HepG2 (cell line): ENCODE measurements at regions of chr10 and their contacts with region 1.

Region 1: GRCh38 chr10:93482145-93482834 is at the start of gene MYOF:
- DNase-seq: peak; percentile 59
- ATAC-seq: peak; percentile 82
- H3K4me3 ChIP-seq: peak within 1 kb of the TSS; percentile 50 to 65 (median 57)
- H3K27ac ChIP-seq: no peak within 1 kb of the TSS
- H3K4me1 ChIP-seq: peaks cover 8% of the 10 kb centered on the region; the same call in 1 of the 2 replicates
- H3K27me3 ChIP-seq: peaks cover 0 to 19% of the 10 kb centered on the region in 2 experiments; a peak in 3 of 5 replicates
- CTCF ChIP-seq: peak; percentile 74
- EP300 ChIP-seq: no peak
- POLR2A ChIP-seq: no peak
- RAD21 ChIP-seq: peak; percentile 69; the same call in 1 of the 2 replicates
- total RNA-seq, gene MYOF: 0.42 and 0.66 TPM in 2 replicates

Region 2: GRCh38 chr10:93376372-93377293 is 105.7 kb before region 1 on chr10:
- CTCF ChIA-PET with region 1: interaction called, 86 read pairs
- POLR2A ChIA-PET with region 1: no interaction called
- in situ Hi-C with region 1: loop called (anchors 5 kb)
- intact Hi-C with region 1: loop called (anchors 1 kb)
- DNase-seq: peak; percentile 69
- ATAC-seq: peak; percentile 87
- H3K4me3 ChIP-seq: no peak overlapping the region
- H3K27ac ChIP-seq: no peak overlapping the region
- H3K4me1 ChIP-seq: peaks cover 10% of the 10 kb centered on the region
- H3K27me3 ChIP-seq: no peaks in the 10 kb centered on the region
- CTCF ChIP-seq: peak; percentile 91
- EP300 ChIP-seq: no peak
- POLR2A ChIP-seq: no peak
- RAD21 ChIP-seq: peak; percentile 86

Region 3: DNA sequence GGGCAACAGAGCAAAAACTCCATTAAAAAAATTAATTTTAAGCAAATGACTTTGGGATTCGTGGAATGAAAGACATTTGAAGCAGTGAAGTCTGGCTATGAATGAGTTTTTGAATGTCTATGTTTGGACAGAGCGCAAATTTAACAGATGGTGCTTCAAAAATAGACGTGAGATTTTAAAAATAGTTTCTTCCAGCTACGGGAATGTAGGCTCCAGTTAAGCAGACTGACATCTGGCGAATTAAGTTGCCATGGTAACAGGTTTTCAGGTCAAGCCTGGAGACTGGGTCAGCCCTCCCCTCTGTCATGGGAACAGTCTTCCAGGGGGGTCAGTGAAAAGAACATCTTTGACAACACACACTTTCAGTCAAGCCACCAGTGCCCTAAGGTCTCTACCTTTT is 62.2 kb before region 1 on chr10:
- CTCF ChIA-PET with region 1: no interaction called
- POLR2A ChIA-PET with region 1: no interaction called
- in situ Hi-C with region 1: no loop called
- intact Hi-C with region 1: loop called (anchors 10 kb)
- DNase-seq: no peak
- ATAC-seq: no peak
- H3K4me3 ChIP-seq: no peak overlapping the region
- H3K27ac ChIP-seq: no peak overlapping the region
- H3K4me1 ChIP-seq: peaks cover 14% of the 10 kb centered on the region
- H3K27me3 ChIP-seq: no peaks in the 10 kb centered on the region
- CTCF ChIP-seq: no peak
- EP300 ChIP-seq: no peak
- POLR2A ChIP-seq: no peak
- RAD21 ChIP-seq: no peak

Region 4: DNA sequence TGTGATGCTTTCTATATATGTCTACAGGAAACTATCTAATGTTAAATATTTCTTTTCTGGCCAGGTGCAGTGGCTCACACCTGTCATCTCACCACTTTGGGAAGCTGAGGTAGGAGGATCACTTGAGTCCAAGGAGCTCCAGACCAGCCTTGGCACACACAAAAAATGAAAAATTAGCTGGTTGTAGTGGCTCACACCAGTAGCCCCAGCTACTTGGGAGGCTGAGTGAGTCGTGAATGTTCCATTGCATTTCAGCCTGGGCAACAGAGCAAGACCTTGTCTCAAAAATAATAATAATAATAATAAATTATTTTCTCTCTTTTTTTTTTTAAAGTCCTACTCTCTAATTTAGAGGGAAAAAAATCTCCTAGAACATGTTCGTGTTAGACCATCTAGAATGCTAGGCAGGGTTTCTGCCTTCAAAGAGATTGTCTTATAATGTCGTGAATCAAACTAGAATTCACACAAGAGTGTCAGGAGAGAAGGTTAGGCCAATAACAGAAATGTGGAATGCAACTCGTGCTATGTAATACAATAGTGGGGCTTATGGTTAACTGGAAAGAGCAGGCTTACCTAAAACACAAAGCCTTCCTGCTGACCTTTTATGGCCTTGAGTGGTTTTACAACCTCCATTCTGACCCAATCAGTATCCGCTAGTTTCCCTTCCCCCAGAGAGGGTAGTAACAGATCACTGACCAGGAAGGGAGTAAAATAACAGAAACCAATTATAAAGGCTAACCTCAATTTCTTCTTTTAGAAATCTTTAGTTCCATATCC is 46.5 kb before region 1 on chr10:
- CTCF ChIA-PET with region 1: no interaction called
- POLR2A ChIA-PET with region 1: no interaction called
- in situ Hi-C with region 1: no loop called
- intact Hi-C with region 1: no loop called
- DNase-seq: peak; percentile 35
- ATAC-seq: no peak
- H3K4me3 ChIP-seq: no peak overlapping the region
- H3K27ac ChIP-seq: no peak overlapping the region
- H3K4me1 ChIP-seq: peaks cover 25% of the 10 kb centered on the region
- H3K27me3 ChIP-seq: no peaks in the 10 kb centered on the region
- CTCF ChIP-seq: no peak
- EP300 ChIP-seq: no peak
- POLR2A ChIP-seq: no peak
- RAD21 ChIP-seq: no peak

Region 5: GRCh38 chr10:93515071-93516005 is 33.0 kb after region 1 on chr10:
- CTCF ChIA-PET with region 1: interaction called, 6 read pairs
- POLR2A ChIA-PET with region 1: no interaction called
- in situ Hi-C with region 1: no loop called
- intact Hi-C with region 1: loop called (anchors 1 kb)
- DNase-seq: no peak
- ATAC-seq: no peak
- H3K4me3 ChIP-seq: no peak overlapping the region
- H3K27ac ChIP-seq: no peak overlapping the region
- H3K4me1 ChIP-seq: no peaks in the 10 kb centered on the region
- H3K27me3 ChIP-seq: no peaks in the 10 kb centered on the region
- CTCF ChIP-seq: no peak
- EP300 ChIP-seq: no peak
- POLR2A ChIP-seq: no peak
- RAD21 ChIP-seq: no peak